Activated CD8-positive, alpha-beta memory T cell treated with anti-CD3 and anti-CD28 coated beads, Interleukin-2, amount 10 ng/mL, durations not matched to agents 7 days and 5 days (primary cell): ENCODE measurements at regions of chr7 and their contacts with region 1.

Region 1: DNA sequence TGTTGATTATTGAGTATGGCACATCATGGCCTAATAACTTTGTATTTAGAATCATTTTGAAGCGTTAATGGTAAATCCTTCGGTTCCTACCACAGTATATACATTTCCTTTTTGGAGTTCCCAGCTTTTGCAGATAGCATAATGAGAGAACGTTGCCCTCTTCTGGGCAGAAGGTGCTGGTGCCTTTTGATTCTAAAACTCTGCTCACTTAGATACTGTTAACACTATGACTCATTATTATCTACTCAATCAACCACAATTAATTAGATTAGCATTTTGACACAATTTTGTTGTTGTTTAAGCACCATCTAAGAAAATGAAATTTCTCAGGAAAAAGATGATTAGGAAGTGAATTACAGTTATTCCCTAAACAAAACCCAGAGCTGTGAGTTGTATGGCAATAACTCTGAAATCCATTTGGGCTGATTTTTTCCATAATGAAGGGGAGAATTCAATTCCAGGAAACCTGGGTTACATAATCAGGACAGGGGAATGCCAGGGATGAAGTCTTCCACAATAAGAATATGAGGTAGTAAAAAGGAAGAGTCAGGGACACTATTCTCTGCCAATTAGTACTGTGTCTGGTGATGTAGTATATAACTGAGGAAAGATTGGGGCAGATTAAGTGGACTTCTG is 11.5 kb upstream of the DLD start:
- DNase-seq: peak; percentile 55
- ATAC-seq: peak; percentile 79
- H3K4me3 Mint-ChIP-seq: no peak overlapping the region
- H3K27ac Mint-ChIP-seq: no peak overlapping the region
- H3K4me1 Mint-ChIP-seq: peaks cover 22% of the 10 kb centered on the region
- H3K27me3 Mint-ChIP-seq: peaks cover 6% of the 10 kb centered on the region

Region 2: DNA sequence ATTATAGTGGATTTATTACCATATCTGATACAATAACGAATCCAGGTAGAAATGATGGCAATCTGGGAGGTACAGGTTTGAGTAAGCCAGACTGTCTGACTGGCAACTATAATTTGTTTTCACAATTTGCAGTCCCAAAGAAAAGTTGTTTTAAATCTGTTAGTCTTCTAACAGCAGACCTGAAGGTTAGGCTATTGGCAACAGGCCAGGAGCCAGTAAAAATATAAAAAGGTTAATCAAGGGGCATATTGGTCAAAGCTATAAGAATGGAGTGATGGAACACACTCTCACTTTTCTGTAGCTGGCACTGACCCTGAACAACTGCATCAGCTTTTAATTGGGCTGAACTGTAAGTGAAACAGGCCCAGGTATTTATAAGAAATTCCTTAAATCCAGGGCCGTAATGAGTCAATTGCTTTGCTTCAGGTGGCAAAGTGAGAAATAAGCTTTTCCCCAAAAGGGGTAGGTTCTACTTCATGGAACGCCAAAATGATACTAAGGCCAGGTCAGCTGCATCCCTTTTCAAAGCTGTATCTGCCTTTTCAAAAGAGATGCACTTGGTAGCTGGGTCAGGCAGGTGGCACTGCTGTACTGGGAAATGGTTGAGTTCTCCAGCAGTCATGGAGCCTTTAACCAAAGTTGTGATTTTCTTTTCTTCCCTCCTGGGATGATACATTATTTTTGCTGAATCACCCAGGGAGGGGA is 416.6 kb before region 1 on chr7:
- CTCF ChIA-PET with region 1: interaction called, 16 read pairs
- DNase-seq: peak; percentile 62
- ATAC-seq: peak; percentile 86
- H3K4me3 Mint-ChIP-seq: no peak overlapping the region
- H3K27ac Mint-ChIP-seq: no peak overlapping the region
- H3K4me1 Mint-ChIP-seq: no peaks in the 10 kb centered on the region
- H3K27me3 Mint-ChIP-seq: no peaks in the 10 kb centered on the region

Region 3: GRCh38 chr7:107628461-107629064 is 251.0 kb before region 1 on chr7:
- CTCF ChIA-PET with region 1: no interaction called
- DNase-seq: no peak
- ATAC-seq: peak; percentile 51
- H3K4me3 Mint-ChIP-seq: no peak overlapping the region
- H3K27ac Mint-ChIP-seq: peak overlapping the region; percentile 58
- H3K4me1 Mint-ChIP-seq: peaks cover 22% of the 10 kb centered on the region
- H3K27me3 Mint-ChIP-seq: no peaks in the 10 kb centered on the region

Region 4: DNA sequence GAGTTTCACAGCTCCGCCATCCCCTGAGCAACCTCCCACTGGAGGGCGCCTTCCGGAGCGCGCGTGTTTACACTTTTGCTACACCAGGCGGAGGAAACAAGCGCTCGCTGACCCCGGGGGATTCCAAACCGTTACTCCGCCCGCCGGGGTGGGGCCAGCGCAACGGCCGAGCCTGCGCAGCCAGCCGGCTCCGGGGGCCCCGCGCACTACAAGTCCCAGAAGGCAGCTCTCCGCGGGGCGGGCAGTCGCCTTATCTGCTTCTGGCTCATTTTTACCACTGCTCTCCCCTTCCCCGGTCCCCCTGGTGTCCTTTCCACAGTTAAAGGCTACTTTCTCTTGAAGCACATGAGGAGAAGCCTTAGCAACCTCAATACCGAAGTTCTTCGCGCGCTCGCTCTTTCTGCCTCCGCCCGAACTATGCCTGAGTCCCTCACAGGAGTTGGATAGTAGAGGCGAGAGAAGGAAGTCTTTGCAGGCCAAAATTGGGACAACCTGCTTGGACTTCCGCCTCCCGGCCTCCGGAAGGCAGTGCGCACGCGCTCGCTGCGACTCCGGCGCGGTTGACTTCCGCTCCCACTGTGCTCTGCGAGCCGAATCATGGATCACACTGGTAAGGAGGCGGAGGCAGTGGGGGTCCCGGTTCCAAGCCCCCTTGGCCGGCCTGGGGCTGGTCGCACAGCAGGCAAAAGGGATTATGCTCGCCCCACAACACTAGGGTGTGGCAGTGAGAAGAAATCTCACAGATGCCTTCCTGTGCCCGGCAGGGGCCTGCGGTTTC is 135.8 kb before region 1 on chr7 and contains the start of gene CBLL1:
- CTCF ChIA-PET with region 1: interaction called, 199 read pairs
- DNase-seq: peak; percentile 98
- ATAC-seq: peak; percentile 94
- H3K4me3 Mint-ChIP-seq: peak within 1 kb of the TSS; percentile 95
- H3K27ac Mint-ChIP-seq: peak within 1 kb of the TSS; percentile 100
- H3K4me1 Mint-ChIP-seq: peaks cover 43% of the 10 kb centered on the region
- H3K27me3 Mint-ChIP-seq: no peaks in the 10 kb centered on the region
- total RNA-seq, gene CBLL1: 32.2 to 39.7 TPM

Region 5: DNA sequence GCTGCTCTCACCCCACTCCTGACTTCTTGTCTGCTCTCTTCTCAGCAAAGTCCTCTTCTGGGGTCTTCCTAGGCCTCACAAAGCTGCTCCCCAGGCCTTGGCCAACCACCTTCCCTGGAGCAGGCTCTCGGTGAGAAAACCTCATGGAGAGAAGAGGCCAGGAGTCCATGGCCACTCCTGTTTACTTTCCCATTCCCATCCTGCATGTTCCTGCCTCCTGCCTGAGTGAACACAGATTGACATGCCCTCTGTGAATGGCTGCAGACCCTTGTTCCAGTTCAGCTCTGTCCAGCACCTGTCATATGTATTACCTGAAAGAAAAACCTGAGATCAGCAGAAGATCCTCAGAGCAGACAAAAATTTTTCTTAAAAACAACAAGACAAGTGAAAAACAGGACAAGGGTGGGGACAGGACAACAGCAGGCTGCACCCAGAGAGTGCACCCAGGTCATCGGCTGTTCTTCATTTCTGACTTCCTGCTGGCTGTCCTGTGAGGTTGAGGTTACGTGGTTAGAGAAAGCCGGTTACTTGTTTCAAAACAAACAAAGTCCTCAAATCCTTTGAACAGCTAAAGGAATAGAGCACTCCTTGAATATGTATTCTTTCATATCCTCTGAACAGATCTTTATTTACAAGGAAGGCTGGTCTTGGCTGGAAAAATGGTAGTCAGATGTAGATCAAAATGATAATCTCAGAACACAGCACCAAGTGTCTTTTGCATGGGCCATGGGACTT is 22.5 kb before region 1 on chr7:
- CTCF ChIA-PET with region 1: interaction called, 18 read pairs
- DNase-seq: peak; percentile 76
- ATAC-seq: peak; percentile 92
- H3K4me3 Mint-ChIP-seq: peak overlapping the region; percentile 13
- H3K27ac Mint-ChIP-seq: peak overlapping the region; percentile 78
- H3K4me1 Mint-ChIP-seq: peaks cover 21% of the 10 kb centered on the region
- H3K27me3 Mint-ChIP-seq: no peaks in the 10 kb centered on the region

Region 6: DNA sequence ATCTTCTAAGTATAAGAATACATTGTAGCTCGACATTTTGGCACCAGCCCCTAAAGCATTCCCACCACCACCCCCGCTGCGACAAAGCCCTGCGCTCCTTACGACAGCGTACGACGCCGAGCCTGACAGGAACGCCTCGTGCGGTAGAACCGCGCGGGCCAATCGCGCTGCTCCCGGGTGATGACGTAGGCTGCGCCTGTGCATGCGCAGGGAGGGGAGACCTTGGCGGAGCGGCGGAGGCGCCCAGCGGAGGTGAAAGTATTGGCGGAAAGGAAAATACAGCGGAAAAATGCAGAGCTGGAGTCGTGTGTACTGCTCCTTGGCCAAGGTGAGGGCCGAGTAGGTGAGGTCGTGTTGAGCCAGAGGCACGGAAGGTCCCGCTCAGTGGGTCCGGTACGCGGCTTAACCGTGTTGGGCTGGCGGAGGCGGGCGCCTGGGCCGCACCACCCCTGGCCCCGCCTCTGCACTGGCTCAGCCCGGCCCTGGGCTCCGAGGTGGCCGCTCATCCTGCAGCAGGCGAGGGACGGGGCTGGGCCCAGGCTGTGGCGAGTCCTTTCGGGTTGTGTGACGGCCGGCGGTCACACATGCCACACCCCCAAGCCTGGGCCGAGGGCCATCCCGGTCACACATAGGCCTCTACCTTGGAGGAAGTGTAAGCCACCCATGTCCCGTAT is 11.6 kb after region 1 on chr7 and contains the start of gene DLD:
- CTCF ChIA-PET with region 1: interaction called, 30 read pairs
- DNase-seq: peak; percentile 97
- ATAC-seq: peak; percentile 98
- H3K4me3 Mint-ChIP-seq: peak within 1 kb of the TSS; percentile 95
- H3K27ac Mint-ChIP-seq: peak within 1 kb of the TSS; percentile 97
- H3K4me1 Mint-ChIP-seq: peaks cover 41% of the 10 kb centered on the region
- H3K27me3 Mint-ChIP-seq: peaks cover 4% of the 10 kb centered on the region
- total RNA-seq, gene DLD: 64.1 to 78.2 TPM